ENCODE measurements at regions of chr1 and their contacts with region 1.

Region 1: GRCh38 chr1:26066857-26067256 is 573 bp downstream of the TRIM63 start:
- DNase-seq: peak; percentile 67
- ATAC-seq: peak; percentile 90 to 95

Region 2: DNA sequence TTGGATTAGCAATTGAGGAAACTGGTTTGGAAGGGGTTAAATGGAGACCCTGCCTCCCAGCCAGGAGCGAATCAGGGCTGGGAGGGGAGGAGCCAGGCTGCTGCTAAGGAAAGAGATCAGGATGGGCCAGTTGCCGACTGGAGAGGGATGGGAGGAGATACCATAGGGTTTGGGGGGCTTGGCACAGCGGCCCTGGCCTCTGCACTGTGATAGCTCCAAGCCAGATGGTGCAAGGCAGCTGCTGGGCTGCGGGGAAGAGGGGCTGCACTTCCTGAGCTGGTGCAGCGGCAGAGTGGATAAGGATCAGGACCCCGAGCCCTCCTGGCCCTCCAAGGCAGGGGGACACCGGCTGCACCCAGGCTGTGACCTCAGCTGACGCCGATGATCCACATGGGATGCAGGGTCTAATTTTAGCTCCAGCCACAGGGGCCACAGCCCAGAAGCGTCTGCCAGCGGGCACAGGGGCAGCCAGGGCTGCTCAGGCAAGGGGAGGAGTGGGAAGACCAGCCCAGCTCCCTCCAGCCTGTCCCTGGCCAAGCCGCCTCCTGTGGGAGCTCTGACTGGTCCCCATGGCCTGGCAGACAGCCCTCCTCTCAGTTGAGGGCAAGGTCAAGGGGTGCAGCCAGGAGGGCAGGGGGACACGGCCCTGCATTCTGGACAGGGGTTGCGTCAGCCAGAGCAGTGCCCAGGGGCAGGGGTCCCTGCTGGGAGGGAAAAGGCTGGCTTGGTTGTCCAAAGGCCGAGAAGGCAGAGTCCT is 45.0 kb before region 1 on chr1 and contains the start of gene EXTL1:
- intact Hi-C with region 1: no loop called
- DNase-seq: peak; percentile 68
- ATAC-seq: peak; percentile 82 to 88
- total RNA-seq, gene EXTL1: 1.3 to 3.2 TPM

Region 3: DNA sequence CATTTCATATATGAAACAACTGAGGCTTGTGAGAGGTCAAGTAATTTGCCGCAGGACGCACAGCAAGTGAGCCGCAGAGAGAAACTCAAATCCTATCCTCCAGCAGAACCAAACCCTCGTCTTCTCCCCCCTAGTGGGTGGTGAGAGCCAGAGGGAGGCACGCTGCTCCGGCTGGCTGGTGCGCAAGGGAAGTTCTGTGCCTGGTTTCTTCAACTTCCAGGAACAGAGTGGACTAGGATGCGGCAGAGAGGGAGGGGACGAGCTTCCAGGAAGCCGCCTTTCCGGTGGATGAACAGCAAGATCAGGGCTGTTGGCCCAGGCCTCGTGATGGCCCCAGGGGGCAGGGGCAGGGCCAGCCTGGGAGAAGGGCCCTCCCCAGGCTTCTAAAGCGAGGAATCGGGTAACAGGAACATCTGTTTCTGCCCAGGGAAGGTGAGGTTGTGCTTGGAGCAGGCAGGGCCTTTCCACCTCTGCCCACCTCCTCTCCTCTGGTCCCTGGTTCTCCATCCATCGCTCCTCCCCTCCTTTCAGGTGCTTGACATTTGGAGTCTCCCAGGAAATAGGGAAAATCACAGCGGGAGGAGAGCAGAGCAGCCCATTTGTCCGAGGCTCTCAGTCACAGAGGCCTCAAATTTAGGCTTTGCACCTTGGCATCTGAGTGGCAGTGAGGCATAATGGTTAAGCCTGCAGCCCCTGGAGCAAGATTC is 28.0 kb after region 1 on chr1:
- intact Hi-C with region 1: loop called in 1 of 2 experiments (anchors 2 kb)
- DNase-seq: peak; percentile 79
- ATAC-seq: peak; percentile 81

Region 4: GRCh38 chr1:26161415-26162219 is 94.8 kb after region 1 on chr1:
- intact Hi-C with region 1: no loop called
- DNase-seq: peak; percentile 80
- ATAC-seq: peak; percentile 65 to 66